ENCODE measurements at regions of chr3 and their contacts with region 1.

Region 1: DNA sequence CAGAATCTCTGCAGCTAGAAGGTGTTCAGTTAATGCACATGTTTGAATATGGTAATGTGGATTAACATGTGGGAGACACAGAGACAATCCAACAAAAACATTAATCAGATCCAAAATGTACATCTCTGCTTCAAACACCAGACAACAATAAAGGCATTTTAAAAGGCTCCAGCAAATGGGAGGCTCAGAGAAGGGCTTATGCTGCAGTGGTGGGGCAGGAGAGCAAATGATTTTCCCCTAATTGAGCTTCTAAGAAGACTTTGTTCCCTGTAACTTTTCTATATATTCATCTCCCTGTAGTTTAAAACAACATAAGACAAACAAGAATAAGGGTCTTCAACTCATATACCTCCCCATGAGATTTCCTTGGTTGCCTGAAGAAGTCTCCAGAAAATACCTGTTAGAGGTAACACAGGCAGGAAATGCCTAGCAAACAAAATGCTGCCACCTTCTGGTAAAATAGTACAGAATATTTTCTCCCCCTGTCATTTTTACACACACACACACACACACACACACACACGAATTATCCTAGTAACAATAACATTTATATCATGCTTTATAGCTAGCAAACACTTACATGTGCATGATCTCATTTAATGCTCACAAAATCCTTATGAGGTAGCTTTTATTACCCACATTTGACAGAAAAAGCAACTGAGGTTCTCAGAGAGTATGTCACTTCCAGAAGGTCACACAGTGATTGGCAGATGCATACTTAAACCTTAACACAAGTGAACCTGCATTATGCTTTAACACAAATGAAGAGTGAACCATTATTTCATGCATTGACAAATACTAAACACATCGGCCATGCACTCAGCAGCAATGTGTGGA is 123.4 kb upstream of the MB21D2 start:
- DNase-seq: no peak
- ATAC-seq: peak in 1 of 2 donors; percentile 55
- H3K4me3 ChIP-seq: no peak overlapping the region
- H3K27ac ChIP-seq: no peak overlapping the region
- H3K4me1 ChIP-seq: no peaks in the 10 kb centered on the region
- H3K27me3 ChIP-seq: no peaks in the 10 kb centered on the region
- CTCF ChIP-seq: peak; percentile 42

Region 2: DNA sequence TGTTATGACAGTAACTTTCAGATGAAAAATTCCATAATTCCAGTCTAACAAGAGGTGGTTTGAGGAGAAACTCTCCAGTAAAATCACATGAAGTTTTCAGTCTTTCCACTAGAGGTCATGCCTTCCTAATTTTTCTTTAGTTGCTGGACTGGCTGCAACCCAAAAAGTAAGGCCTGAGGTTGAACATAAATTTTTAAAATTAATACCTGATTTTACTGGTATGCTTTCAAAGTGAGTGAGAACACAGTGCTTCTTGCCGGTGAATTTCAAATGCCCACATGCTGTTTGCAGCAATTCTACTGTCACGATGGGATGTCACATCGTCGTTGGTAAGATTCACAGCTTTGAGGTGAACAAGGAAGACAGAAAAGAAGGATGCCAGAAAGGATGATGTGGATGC is 224.7 kb before region 1 on chr3:
- intact Hi-C with region 1: loop called (anchors 5 kb)
- DNase-seq: no peak
- ATAC-seq: peak in 1 of 2 donors; percentile 63
- H3K4me3 ChIP-seq: no peak overlapping the region
- H3K27ac ChIP-seq: no peak overlapping the region
- H3K4me1 ChIP-seq: no peaks in the 10 kb centered on the region
- H3K27me3 ChIP-seq: no peaks in the 10 kb centered on the region
- CTCF ChIP-seq: peak; percentile 70